ENCODE measurements at regions of chr6 and their contacts with region 1.

Region 1: DNA sequence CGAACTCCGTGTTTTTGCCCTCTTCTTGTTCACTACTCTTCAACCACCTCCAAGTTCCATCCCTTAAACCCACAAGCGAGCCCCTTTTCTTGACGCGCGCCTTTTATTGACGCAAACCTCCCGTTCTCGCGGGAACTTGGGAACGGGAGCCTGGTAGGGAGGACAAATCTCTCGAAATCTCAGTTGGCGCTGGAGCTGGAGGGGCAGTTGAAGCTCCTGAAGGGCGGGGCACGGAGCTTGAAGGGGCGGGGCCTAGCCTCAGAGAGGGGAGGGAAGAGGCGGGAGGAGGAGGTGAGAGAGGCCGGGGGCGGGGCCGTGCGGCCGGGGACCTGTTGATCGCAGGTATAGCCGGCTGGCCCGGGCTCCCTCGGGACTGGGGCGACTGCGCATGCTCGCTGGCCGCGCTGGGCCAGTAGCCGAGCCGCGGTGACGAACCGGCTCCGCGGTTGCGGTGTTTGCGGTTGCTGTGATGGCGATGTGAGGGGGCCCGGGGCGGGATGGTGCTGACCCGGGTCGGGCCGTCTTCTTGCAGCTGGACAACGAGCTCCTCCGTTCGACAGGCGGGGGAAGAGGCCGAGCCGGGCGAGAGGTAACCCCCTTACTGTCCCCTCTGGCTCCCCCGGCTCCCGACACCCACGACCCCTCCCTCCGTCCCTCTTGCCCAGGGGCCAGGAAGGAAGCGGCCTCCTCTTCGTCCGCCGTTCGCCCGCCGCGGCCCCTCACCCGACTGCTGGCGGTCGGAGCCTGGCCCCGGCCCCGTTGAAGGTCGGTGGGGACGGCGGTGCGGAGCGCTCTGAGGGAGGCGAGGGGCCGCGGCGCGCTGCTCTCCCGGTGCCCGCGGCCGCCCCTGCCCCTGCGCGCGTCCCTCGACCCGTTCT is at the start of gene FAM135A:
- DNase-seq: peak; percentile 99
- H3K4me3 Mint-ChIP-seq: peak within 1 kb of the TSS; percentile 99
- H3K27ac Mint-ChIP-seq: peak within 1 kb of the TSS; percentile 84
- H3K4me1 Mint-ChIP-seq: peaks cover 16% of the 10 kb centered on the region
- H3K27me3 Mint-ChIP-seq: no peaks in the 10 kb centered on the region
- total RNA-seq, gene FAM135A: 11.5 to 11.9 TPM

Region 2: GRCh38 chr6:70566751-70567382 is 153.5 kb after region 1 on chr6 and contains the start of gene SDHAF4:
- CTCF ChIA-PET with region 1: no interaction called
- intact Hi-C with region 1: loop called (anchors 1 kb)
- DNase-seq: peak; percentile 95
- H3K4me3 Mint-ChIP-seq: peak within 1 kb of the TSS; percentile 83
- H3K27ac Mint-ChIP-seq: peak within 1 kb of the TSS; percentile 83
- H3K4me1 Mint-ChIP-seq: peaks cover 11% of the 10 kb centered on the region
- H3K27me3 Mint-ChIP-seq: no peaks in the 10 kb centered on the region
- total RNA-seq, gene SDHAF4: 16.8 to 17.9 TPM

Region 3: DNA sequence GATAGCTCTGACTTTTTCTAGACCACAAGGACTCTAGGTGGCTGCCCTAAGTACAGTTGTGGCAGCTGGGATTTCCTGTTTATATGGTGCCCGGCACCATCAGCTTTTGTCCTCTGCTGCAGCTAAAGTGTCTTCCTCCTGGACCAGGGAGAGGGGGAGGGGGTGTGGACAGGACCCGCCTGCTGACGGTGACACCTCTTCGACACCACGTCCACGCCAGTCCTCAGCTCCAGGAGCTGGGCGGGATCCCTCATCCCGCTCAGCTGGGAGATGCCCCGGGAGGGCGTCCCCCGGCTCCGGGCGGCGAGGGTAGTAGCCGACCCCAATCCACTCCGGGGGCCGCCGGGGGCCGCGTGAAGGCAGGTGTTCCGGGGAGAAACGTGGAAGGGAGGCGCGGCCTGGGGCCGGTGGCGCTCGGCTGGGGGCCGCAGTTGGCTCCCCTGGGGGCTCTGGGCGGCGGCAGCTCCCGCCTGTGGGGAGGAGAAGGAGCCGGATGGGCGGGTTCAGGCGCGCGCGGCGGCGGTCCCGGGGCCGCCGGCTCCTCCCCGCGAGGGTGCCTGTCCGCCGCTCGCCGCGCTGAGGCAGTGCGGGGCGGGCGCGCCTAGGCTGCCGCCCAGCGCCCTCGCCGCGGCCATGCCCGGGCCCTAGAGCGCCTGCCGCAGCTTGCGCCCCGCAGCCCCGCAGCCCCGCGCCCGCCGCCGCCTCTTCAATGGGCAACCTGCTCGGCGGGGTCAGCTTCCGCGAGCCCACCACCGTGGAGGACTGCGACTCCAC is 875.1 kb after region 1 on chr6 and contains the start of gene OGFRL1:
- CTCF ChIA-PET with region 1: no interaction called
- intact Hi-C with region 1: loop called (anchors 1 kb)
- DNase-seq: peak; percentile 63
- H3K4me3 Mint-ChIP-seq: peak within 1 kb of the TSS; percentile 72
- H3K27ac Mint-ChIP-seq: peak within 1 kb of the TSS; percentile 31
- H3K4me1 Mint-ChIP-seq: peaks cover 22% of the 10 kb centered on the region
- H3K27me3 Mint-ChIP-seq: peaks cover 7% of the 10 kb centered on the region
- total RNA-seq, gene OGFRL1: 2.6 to 3.1 TPM

Measured in activated naive CD4-positive, alpha-beta T cell treated with anti-CD3 and anti-CD28 coated beads for 36 hours (primary cell).